Activated B cell treated with CpG ODN at 0.5 μM for 24 hours (primary cell): ENCODE measurements at regions of chr6 and their contacts with region 1.

Region 1: DNA sequence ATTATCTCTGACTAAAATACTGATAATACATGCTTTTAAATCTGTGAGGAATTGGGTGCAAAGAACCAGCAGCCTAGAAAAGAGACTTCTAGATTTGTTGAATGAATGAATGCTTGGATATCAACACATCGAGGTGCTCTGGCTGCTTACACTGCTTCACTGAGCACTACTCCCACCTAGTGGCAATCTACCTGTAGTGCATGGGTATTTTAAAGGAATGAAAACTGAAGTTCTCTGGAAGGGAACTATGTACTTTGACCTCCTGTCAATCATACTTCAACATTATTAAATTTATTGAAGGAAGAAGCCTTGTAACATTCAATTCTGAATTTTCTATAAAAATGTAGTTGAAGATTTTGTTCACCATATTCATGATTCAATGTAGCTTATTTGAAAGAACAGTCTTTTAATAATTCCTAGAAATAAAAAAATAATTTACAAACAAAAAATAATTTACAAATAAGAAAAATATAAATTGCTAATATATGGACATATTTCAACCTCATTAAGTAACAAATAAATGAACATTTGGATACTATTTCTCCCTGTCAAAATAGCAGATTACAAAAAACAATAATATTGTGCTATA is 111.2 kb upstream of the MMS22L start:
- DNase-seq: no peak
- ATAC-seq: peak; percentile 81
- H3K4me3 Mint-ChIP-seq: no peak overlapping the region
- H3K27ac Mint-ChIP-seq: no peak overlapping the region
- H3K4me1 Mint-ChIP-seq: no peaks in the 10 kb centered on the region
- H3K27me3 Mint-ChIP-seq: peaks cover 8% of the 10 kb centered on the region
- CTCF ChIP-seq: peak; percentile 97

Region 2: GRCh38 chr6:95431637-95432228 is 1962.5 kb before region 1 on chr6:
- CTCF ChIA-PET with region 1: no interaction called
- POLR2A ChIA-PET with region 1: no interaction called
- intact Hi-C with region 1: loop called (anchors 5 kb)
- DNase-seq: no peak
- ATAC-seq: no peak
- H3K4me3 Mint-ChIP-seq: no peak overlapping the region
- H3K27ac Mint-ChIP-seq: no peak overlapping the region
- H3K4me1 Mint-ChIP-seq: no peaks in the 10 kb centered on the region
- H3K27me3 Mint-ChIP-seq: no peaks in the 10 kb centered on the region
- CTCF ChIP-seq: no peak

Region 3: DNA sequence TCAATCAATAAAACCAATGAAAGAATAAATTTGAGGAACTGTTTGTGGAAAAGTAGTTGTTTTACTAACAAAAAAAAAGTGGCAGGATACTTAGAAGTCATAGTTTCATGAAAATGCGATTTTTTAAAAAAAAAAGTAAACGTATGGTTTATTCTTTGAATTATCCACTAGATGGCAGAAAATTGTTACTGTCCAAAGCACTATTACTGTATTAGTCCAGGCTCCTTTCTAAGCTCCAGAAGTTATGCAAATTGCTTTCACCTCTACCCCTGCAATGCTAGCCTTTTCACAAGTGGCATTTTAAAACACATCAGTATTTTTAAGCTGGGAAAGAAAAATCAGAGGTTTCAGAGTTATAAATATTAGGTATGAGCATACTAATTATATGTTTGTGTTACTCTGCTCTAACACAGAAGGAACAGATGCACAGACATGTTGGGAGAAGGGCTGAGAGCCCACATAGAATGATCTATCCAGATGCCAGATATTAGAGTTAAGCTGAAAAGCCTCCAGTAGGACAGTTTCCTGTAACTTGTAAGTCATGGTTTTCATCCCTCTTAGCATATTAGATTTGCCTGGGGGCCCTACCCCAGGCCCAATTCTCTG is 767.4 kb before region 1 on chr6:
- CTCF ChIA-PET with region 1: no interaction called
- POLR2A ChIA-PET with region 1: no interaction called
- intact Hi-C with region 1: loop called (anchors 1 kb)
- DNase-seq: no peak
- ATAC-seq: peak; percentile 57
- H3K4me3 Mint-ChIP-seq: no peak overlapping the region
- H3K27ac Mint-ChIP-seq: no peak overlapping the region
- H3K4me1 Mint-ChIP-seq: peaks cover 6% of the 10 kb centered on the region
- H3K27me3 Mint-ChIP-seq: peaks cover 4% of the 10 kb centered on the region
- CTCF ChIP-seq: no peak

Region 4: GRCh38 chr6:97186416-97186999 is 207.7 kb before region 1 on chr6:
- CTCF ChIA-PET with region 1: interaction called, 36 read pairs
- POLR2A ChIA-PET with region 1: no interaction called
- intact Hi-C with region 1: loop called (anchors 1 kb)
- DNase-seq: peak; percentile 15
- ATAC-seq: peak; percentile 71
- H3K4me3 Mint-ChIP-seq: no peak overlapping the region
- H3K27ac Mint-ChIP-seq: no peak overlapping the region
- H3K4me1 Mint-ChIP-seq: no peaks in the 10 kb centered on the region
- H3K27me3 Mint-ChIP-seq: no peaks in the 10 kb centered on the region
- CTCF ChIP-seq: peak; percentile 99

Region 5: GRCh38 chr6:97205966-97206365 is 188.3 kb before region 1 on chr6:
- CTCF ChIA-PET with region 1: no interaction called
- POLR2A ChIA-PET with region 1: no interaction called
- intact Hi-C with region 1: no loop called
- DNase-seq: no peak
- ATAC-seq: no peak
- H3K4me3 Mint-ChIP-seq: no peak overlapping the region
- H3K27ac Mint-ChIP-seq: no peak overlapping the region
- H3K4me1 Mint-ChIP-seq: no peaks in the 10 kb centered on the region
- H3K27me3 Mint-ChIP-seq: no peaks in the 10 kb centered on the region
- CTCF ChIP-seq: no peak

Region 6: GRCh38 chr6:97282726-97283617 is 111.3 kb before region 1 on chr6 and contains the start of gene MMS22L:
- CTCF ChIA-PET with region 1: no interaction called
- POLR2A ChIA-PET with region 1: no interaction called
- intact Hi-C with region 1: loop called (anchors 5 kb)
- DNase-seq: peak; percentile 83
- ATAC-seq: peak; percentile 98
- H3K4me3 Mint-ChIP-seq: peak within 1 kb of the TSS; percentile 91
- H3K27ac Mint-ChIP-seq: peak within 1 kb of the TSS; percentile 87
- H3K4me1 Mint-ChIP-seq: peaks cover 21% of the 10 kb centered on the region
- H3K27me3 Mint-ChIP-seq: no peaks in the 10 kb centered on the region
- CTCF ChIP-seq: no peak
- total RNA-seq, gene MMS22L: 15.5 and 17.9 TPM in 2 replicates

Region 7: GRCh38 chr6:97423190-97423589 is 28.9 kb after region 1 on chr6:
- CTCF ChIA-PET with region 1: no interaction called
- POLR2A ChIA-PET with region 1: no interaction called
- intact Hi-C with region 1: no loop called
- DNase-seq: no peak
- ATAC-seq: no peak
- H3K4me3 Mint-ChIP-seq: no peak overlapping the region
- H3K27ac Mint-ChIP-seq: no peak overlapping the region
- H3K4me1 Mint-ChIP-seq: no peaks in the 10 kb centered on the region
- H3K27me3 Mint-ChIP-seq: peaks cover 4% of the 10 kb centered on the region
- CTCF ChIP-seq: no peak